SK-N-SH (cell line): ENCODE measurements at regions of chr12 and their contacts with region 1.

Region 1: DNA sequence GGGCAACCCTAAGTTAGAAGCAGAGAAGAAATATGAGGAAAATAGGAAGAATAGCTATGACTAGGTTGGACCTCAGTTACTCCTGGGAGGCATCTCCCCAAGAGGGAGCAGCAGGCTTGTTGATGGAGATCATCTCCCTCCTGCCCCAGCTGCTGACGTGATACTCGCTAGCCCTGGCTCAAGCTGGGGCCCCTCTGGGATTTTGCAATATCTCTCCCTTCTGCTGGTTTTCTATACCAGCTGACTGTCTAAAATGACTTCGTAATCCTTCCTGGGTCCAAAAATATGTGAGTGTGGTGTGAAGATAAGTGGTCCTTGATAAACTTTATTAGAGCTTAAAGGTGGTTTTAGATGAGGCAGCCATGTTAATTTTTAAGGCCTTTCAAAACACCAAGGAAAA is 4.5 kb upstream of the HECTD4 start:
- DNase-seq: no peak
- H3K4me3 ChIP-seq: no peak overlapping the region
- H3K27ac ChIP-seq: no peak overlapping the region; a peak in 1 of 4 replicates
- H3K4me1 ChIP-seq: no peaks in the 10 kb centered on the region; a peak in 1 of 4 replicates
- H3K27me3 ChIP-seq: no peaks in the 10 kb centered on the region
- CTCF ChIP-seq: no peak
- EP300 ChIP-seq: no peak
- RAD21 ChIP-seq: no peak

Region 2: DNA sequence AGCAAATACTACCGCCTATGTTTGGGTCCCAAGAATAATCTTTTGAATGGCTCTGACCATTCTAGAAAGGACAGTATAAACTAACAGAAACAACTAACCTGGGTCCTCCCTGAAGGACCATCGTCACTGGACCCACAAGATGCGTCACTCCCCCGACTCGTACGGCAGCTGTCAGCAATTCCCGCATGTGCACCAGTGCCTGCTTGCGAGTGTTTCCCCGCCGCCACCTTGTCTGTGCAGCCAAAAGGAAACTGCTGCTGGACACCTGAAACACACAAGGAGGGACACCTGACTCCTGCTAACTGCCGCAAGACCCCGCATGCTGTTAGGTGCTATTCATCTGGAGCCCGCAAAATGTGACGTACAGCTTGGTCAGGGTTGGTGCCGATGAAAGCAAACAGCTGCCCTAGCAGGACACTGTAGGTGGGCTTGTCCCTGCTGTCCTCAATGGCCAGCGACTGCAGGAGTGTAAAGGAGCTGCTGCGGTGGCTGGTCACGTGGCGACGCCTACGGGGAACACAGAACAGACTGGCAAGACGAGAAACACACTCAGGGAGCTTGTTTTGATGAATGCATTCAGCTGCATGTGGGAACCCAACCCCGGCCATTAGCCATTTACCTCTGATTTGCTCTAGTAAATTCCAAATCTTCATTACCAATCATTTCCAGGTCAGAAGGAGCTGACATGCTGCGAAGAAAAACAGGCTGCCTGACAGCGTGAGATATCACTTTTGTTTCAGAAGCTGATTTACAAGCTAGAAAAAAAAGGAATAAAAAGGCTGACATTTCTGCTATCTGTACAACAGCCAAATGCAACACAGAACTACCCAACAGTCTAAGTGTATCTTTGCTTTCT is 143.2 kb before region 1 on chr12:
- CTCF ChIA-PET with region 1: interaction called, 13 read pairs
- POLR2A ChIA-PET with region 1: no interaction called
- DNase-seq: no peak
- H3K4me3 ChIP-seq: no peak overlapping the region
- H3K27ac ChIP-seq: no peak overlapping the region
- H3K4me1 ChIP-seq: no peaks in the 10 kb centered on the region
- H3K27me3 ChIP-seq: no peaks in the 10 kb centered on the region
- CTCF ChIP-seq: no peak
- EP300 ChIP-seq: no peak
- RAD21 ChIP-seq: no peak

Region 3: DNA sequence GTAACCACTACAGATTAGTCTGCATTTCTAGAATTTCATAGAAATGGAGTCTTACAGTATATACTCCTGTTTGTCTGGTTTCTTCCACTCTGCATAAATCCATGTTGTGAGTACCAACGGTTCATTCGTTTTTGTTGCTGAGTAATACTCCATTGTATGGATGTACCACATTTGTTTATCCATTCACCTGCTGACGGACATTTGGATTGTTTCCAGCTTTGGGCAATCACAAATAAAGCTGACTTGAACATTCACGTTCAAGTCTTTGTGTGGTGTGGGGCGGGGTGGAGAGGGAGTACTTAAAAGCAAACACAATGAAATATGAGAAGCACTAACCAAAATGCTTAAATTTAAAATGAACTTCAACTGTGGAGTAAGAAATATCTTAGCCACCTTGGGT is 11.6 kb before region 1 on chr12:
- CTCF ChIA-PET with region 1: interaction called, 10 read pairs
- POLR2A ChIA-PET with region 1: no interaction called
- DNase-seq: no peak
- H3K4me3 ChIP-seq: no peak overlapping the region
- H3K27ac ChIP-seq: no peak overlapping the region
- H3K4me1 ChIP-seq: no peaks in the 10 kb centered on the region
- H3K27me3 ChIP-seq: no peaks in the 10 kb centered on the region
- CTCF ChIP-seq: no peak
- EP300 ChIP-seq: no peak
- RAD21 ChIP-seq: no peak